ENCODE measurements at regions of chr5 and their contacts with region 1.

Region 1: DNA sequence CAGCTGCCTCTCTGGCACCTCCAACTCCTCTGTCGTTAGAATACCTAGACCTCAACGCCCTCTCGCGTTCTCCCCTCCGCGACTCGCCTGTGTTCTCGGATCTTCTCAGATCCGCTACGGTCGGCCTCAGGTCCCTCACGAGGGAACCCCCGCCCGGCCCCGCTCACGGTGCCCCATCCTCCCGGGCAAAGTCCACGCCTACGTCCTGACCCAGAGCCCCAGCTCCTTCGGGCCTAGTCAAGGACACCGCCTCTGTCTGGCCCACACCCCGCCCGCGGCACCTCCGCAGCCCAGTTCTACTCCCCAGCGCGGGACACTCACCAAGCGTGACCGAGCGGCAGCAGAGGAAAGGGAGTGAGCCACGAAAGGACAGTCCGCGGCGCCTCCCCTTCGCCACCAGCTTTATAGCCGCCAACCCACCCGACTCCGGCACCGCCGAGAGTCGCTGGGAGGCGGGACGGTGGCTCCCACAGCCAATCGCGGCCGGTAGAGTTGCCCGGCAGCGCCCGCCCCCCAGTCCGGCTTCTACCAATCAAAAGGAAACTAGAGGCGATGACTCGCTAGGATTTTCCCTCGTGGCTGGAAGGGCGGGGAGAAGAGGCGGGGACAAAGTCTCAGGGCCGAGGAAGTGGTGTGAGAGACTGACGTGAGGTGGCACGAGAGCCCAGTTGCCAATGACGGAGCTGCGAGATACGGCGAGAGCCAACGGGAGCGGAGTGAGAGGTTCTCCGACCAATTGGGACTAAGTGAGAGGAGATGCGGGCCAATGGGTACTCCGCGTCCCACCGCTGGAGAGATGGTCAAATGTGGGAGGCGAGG is at the start of gene HMGCS1:
- DNase-seq: peak; percentile 98 to 99 (median 98)
- ATAC-seq: peak; percentile 98
- H3K4me3 ChIP-seq: peak within 1 kb of the TSS; percentile 90
- H3K27ac ChIP-seq: peak within 1 kb of the TSS; percentile 83
- H3K4me1 ChIP-seq: peaks cover 13 to 29% of the 10 kb centered on the region in 2 experiments; a peak in 4 of 5 replicates
- H3K27me3 ChIP-seq: no peaks in the 10 kb centered on the region
- CTCF ChIP-seq: peak in 1 of 3 experiments; percentile 29; a peak in 1 of 6 replicates
- EP300 ChIP-seq: peak; percentile 69; the same call in 1 of the 2 replicates
- POLR2A ChIP-seq: peak; percentile 98
- RAD21 ChIP-seq: peak in 1 of 2 experiments; percentile 18; a peak in 2 of 4 replicates
- polyA plus RNA-seq, gene HMGCS1: 84.6 to 93.1 TPM

Region 2: GRCh38 chr5:42908509-42909488 is 404.4 kb before region 1 on chr5:
- CTCF ChIA-PET with region 1: no interaction called
- POLR2A ChIA-PET with region 1: no interaction called
- in situ Hi-C with region 1: no loop called
- intact Hi-C with region 1: loop called (anchors 5 kb)
- DNase-seq: peak; percentile 85 to 96 (median 88)
- ATAC-seq: peak; percentile 95
- H3K4me3 ChIP-seq: peak overlapping the region; percentile 31
- H3K27ac ChIP-seq: no peak overlapping the region
- H3K4me1 ChIP-seq: peaks cover 3 to 6% of the 10 kb centered on the region in 2 experiments; a peak in 2 of 5 replicates
- H3K27me3 ChIP-seq: peaks cover 3 to 7% of the 10 kb centered on the region in 2 experiments; a peak in 3 of 5 replicates
- CTCF ChIP-seq: peak; percentile 90 to 97 (median 92)
- EP300 ChIP-seq: no peak; the same call in 1 of the 2 replicates
- POLR2A ChIP-seq: no peak
- RAD21 ChIP-seq: peak; percentile 82 to 91

Region 3: GRCh38 chr5:43274156-43275114 is 38.8 kb before region 1 on chr5:
- CTCF ChIA-PET with region 1: no interaction called
- POLR2A ChIA-PET with region 1: interaction called, 3 read pairs
- in situ Hi-C with region 1: no loop called
- intact Hi-C with region 1: loop called (anchors 5 kb)
- DNase-seq: peak in 3 of 4 experiments; percentile 38 to 83 (median 74)
- ATAC-seq: peak; percentile 91
- H3K4me3 ChIP-seq: no peak overlapping the region
- H3K27ac ChIP-seq: no peak overlapping the region
- H3K4me1 ChIP-seq: peaks cover 9 to 15% of the 10 kb centered on the region in 2 experiments
- H3K27me3 ChIP-seq: no peaks in the 10 kb centered on the region; a peak in 1 of 5 replicates
- CTCF ChIP-seq: no peak; a peak in 1 of 6 replicates
- EP300 ChIP-seq: 0 out of 2 replicates have a peak, but pooled peaks have one; percentile 7
- POLR2A ChIP-seq: no peak
- RAD21 ChIP-seq: no peak

Region 4: DNA sequence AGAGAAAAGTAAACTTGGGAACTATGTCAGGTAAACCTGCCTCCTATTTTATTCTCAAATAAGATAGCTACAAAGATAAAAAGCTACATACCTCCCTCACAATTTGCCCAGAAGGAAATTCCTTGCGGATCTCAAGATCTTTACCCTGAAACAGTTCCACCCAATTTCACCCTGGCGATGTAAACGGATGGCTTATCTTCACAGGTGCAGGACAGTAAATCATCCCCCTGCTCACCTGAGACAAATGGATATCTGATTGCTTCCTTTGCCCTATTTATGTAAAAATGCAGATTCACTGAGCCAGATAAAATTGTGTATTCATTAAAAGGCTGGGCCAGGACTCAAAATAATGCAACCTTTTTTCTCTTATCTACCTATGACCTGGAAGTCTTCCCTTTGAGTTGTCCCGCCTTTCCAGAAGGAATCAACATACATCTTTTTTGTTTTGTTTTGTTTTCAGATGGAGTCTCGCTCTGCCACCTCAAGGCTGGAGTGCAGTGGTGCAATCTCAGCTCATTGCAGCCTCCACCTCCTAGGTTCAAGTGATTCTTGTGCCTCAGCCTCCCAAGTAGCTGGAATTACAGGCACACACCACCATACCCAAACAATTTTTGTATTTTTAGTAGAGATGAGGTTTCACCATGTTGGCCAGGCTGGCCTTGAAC is 156.6 kb after region 1 on chr5:
- CTCF ChIA-PET with region 1: no interaction called
- POLR2A ChIA-PET with region 1: no interaction called
- in situ Hi-C with region 1: no loop called
- intact Hi-C with region 1: no loop called
- DNase-seq: no peak
- ATAC-seq: no peak; the same call in 2 of the 3 replicates
- H3K4me3 ChIP-seq: no peak overlapping the region
- H3K27ac ChIP-seq: no peak overlapping the region
- H3K4me1 ChIP-seq: no peaks in the 10 kb centered on the region
- H3K27me3 ChIP-seq: no peaks in the 10 kb centered on the region
- CTCF ChIP-seq: no peak
- EP300 ChIP-seq: no peak
- POLR2A ChIP-seq: no peak
- RAD21 ChIP-seq: no peak

Region 5: GRCh38 chr5:43560128-43560527 is 246.9 kb after region 1 on chr5:
- CTCF ChIA-PET with region 1: no interaction called
- POLR2A ChIA-PET with region 1: no interaction called
- in situ Hi-C with region 1: no loop called
- intact Hi-C with region 1: no loop called
- DNase-seq: no peak
- ATAC-seq: no peak
- H3K4me3 ChIP-seq: no peak overlapping the region
- H3K27ac ChIP-seq: no peak overlapping the region
- H3K4me1 ChIP-seq: peaks cover 8 to 11% of the 10 kb centered on the region in 2 experiments; a peak in 4 of 5 replicates
- H3K27me3 ChIP-seq: no peaks in the 10 kb centered on the region
- CTCF ChIP-seq: no peak
- EP300 ChIP-seq: no peak
- POLR2A ChIP-seq: no peak
- RAD21 ChIP-seq: no peak

Measured in K562 (cell line).